Endothelial cell of umbilical vein (primary cell): ENCODE measurements at regions of chr16 and their contacts with region 1.

Region 1: DNA sequence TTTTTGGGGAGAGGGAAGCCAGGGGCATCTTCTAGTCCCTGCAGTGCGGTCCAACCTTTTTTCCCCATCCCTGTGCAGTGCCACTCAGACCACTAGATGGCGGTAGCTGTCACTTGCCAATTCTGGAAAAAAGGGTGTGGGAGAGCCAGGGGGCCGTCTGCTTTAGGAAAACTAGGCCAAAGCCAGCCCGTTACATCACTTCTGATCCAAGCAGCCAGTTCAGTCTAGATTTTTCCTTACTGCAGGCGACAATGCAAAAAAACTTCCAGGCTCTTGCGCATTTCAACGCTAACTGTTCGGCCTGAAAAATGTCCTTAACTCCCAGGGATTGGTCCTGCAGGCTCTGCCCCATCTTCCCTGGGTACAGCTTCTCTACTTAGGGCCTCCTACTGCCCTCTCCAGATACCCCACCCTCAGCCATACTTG is 69.2 kb upstream of the CES5A start:
- DNase-seq: peak; percentile 41
- H3K4me3 ChIP-seq: no peak overlapping the region
- H3K27ac ChIP-seq: no peak overlapping the region
- H3K4me1 ChIP-seq: no peaks in the 10 kb centered on the region
- H3K27me3 ChIP-seq: no peaks in the 10 kb centered on the region
- CTCF ChIP-seq: peak; percentile 90 to 92
- POLR2A ChIP-seq: no peak

Region 2: GRCh38 chr16:55955845-55956244 is 11.5 kb after region 1 on chr16:
- CTCF ChIA-PET with region 1: interaction called, 18 read pairs
- POLR2A ChIA-PET with region 1: no interaction called
- dilution Hi-C with region 1: no loop called
- intact Hi-C with region 1: no loop called
- DNase-seq: no peak
- H3K4me3 ChIP-seq: no peak overlapping the region
- H3K27ac ChIP-seq: no peak overlapping the region
- H3K4me1 ChIP-seq: no peaks in the 10 kb centered on the region
- H3K27me3 ChIP-seq: no peaks in the 10 kb centered on the region
- CTCF ChIP-seq: no peak
- POLR2A ChIP-seq: no peak